BJ (cell line): ENCODE measurements at regions of chr4 and their contacts with region 1.

Region 1: DNA sequence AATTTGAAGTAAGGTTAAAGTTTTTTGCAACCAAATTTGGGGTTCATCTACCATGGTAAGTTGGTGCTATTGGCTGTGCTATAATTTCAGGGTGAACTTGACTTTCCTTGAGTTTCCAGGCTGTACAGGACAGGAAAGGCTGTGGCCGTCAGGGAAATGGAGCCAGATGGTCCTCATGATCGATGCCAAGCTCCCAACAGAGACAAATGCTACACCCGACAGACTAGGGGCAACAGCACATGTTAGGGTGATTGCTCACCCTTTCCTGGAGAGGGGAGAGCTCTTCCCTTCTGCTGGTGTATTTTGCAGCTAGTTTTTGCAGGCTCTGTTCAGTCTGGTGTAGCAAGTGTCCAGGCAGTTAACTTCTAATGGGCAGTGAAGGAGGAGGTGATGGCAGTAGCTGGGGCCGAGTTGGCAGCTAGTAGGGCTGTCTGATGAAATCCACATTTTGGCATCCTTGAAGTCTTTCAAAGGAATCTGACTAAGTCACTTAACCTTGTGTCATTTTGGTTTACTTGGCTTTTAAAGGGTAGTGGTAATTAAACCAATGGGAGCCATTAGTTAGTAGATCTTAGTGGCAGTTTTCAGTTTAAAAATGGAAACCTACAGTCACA is 47.8 kb downstream of the GAB1 start:
- DNase-seq: no peak
- H3K4me3 ChIP-seq: no peak overlapping the region
- H3K27me3 ChIP-seq: no peaks in the 10 kb centered on the region
- CTCF ChIP-seq: no peak

Region 2: GRCh38 chr4:143396695-143397094 is 12.2 kb after region 1 on chr4:
- CTCF ChIA-PET with region 1: interaction called, 12 read pairs
- POLR2A ChIA-PET with region 1: no interaction called
- DNase-seq: no peak
- H3K4me3 ChIP-seq: no peak overlapping the region
- H3K27me3 ChIP-seq: no peaks in the 10 kb centered on the region
- CTCF ChIP-seq: peak; percentile 18; the same call in 1 of the 2 replicates